ENCODE measurements at regions of chr15 and their contacts with region 1.

Region 1: DNA sequence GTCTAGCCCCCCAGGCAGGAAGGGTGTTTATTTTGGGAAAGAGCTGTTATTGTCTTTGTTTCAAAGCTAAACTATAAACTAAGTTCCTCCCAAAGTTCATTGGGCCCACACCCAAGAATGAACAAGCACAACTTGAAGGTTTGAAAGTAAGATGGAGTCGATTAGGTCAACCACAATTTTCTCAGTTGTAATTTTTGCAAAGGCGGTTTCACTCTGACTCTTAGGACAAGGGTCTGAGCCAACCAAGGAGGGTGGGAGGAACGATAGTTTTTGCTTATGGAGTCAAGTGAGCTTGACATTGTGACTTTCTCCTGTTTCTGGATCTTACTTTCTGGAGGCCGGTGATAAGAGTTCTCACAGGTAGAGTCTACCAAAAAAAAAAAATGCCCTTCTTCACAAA is 5.8 kb upstream of the ZNF770 start:
- ATAC-seq: no peak
- H3K4me3 ChIP-seq: no peak overlapping the region
- H3K27ac ChIP-seq: no peak overlapping the region
- H3K4me1 ChIP-seq: peaks cover 2 to 5% of the 10 kb centered on the region in 2 donors

Region 2: DNA sequence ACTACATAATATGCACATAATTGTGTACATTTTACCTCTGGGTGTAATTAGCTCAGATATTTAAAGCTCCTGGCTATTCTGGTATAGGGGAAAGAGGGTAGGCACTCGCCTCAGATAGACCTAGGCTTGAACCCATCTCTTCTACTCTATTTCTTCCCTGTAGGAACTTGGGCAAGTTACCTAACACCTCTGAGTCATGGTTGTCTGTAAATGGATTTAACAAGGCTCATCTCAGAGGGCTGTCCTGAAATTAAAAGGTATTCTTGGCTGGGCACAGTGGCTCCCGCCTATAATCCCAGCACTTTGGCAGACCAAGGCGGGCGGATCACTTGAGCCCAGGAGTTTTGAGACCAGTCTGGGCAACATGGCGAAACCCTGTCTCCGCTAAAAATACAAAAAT is 60.5 kb after region 1 on chr15:
- in situ Hi-C with region 1: loop called in 1 of 9 experiments (anchors 10 kb)
- ATAC-seq: peak in 2 of 8 experiments; percentile 20 to 43
- H3K4me3 ChIP-seq: no peak overlapping the region
- H3K27ac ChIP-seq: no peak overlapping the region
- H3K4me1 ChIP-seq: no peaks in the 10 kb centered on the region

Measured in motor neuron (in vitro differentiated cells).